Ascending aorta (tissue), 2 donors: ENCODE measurements at regions of chr11 and their contacts with region 1.

Region 1: GRCh38 chr11:33257897-33258630 is 883 bp downstream of the HIPK3 start:
- DNase-seq: peak; percentile 35 to 94
- H3K4me3 ChIP-seq: peak overlapping the region; percentile 91 to 94
- H3K27ac ChIP-seq: peak overlapping the region; percentile 100
- H3K4me1 ChIP-seq: peaks cover 0 to 27% of the 10 kb centered on the region in 2 donors
- H3K27me3 ChIP-seq: no peaks in the 10 kb centered on the region
- CTCF ChIP-seq: peak in 2 of 3 experiments; percentile 35 to 42

Region 2: GRCh38 chr11:33039274-33040032 is 218.6 kb before region 1 on chr11 and contains the start of gene TCP11L1:
- intact Hi-C with region 1: loop called (anchors 5 kb)
- DNase-seq: peak; percentile 62 to 95
- H3K4me3 ChIP-seq: peak within 1 kb of the TSS; percentile 85 to 96
- H3K27ac ChIP-seq: peak within 1 kb of the TSS; percentile 97 to 99
- H3K4me1 ChIP-seq: peaks cover 4 to 7% of the 10 kb centered on the region in 2 donors
- H3K27me3 ChIP-seq: no peaks in the 10 kb centered on the region
- CTCF ChIP-seq: no peak
- total RNA-seq, gene TCP11L1: 33.6 TPM

Region 3: GRCh38 chr11:33147559-33147958 is 110.5 kb before region 1 on chr11:
- intact Hi-C with region 1: no loop called
- DNase-seq: no peak
- H3K4me3 ChIP-seq: no peak overlapping the region
- H3K27ac ChIP-seq: no peak overlapping the region
- H3K4me1 ChIP-seq: no peaks in the 10 kb centered on the region
- H3K27me3 ChIP-seq: no peaks in the 10 kb centered on the region
- CTCF ChIP-seq: no peak

Region 4: GRCh38 chr11:33291004-33291777 is 33.1 kb after region 1 on chr11:
- intact Hi-C with region 1: loop called (anchors 2 kb)
- DNase-seq: no peak
- H3K4me3 ChIP-seq: peak overlapping the region in 1 of 2 donors; percentile 5
- H3K27ac ChIP-seq: peak overlapping the region; percentile 17 to 53
- H3K4me1 ChIP-seq: peaks cover 0 to 22% of the 10 kb centered on the region in 2 donors
- H3K27me3 ChIP-seq: no peaks in the 10 kb centered on the region
- CTCF ChIP-seq: no peak

Region 5: GRCh38 chr11:33687733-33688479 is 429.8 kb after region 1 on chr11:
- intact Hi-C with region 1: loop called (anchors 1 kb)
- DNase-seq: no peak
- H3K4me3 ChIP-seq: no peak overlapping the region
- H3K27ac ChIP-seq: no peak overlapping the region
- H3K4me1 ChIP-seq: peaks cover 6 to 17% of the 10 kb centered on the region in 2 donors
- H3K27me3 ChIP-seq: no peaks in the 10 kb centered on the region
- CTCF ChIP-seq: peak; percentile 36 to 62 (median 50)

Region 6: DNA sequence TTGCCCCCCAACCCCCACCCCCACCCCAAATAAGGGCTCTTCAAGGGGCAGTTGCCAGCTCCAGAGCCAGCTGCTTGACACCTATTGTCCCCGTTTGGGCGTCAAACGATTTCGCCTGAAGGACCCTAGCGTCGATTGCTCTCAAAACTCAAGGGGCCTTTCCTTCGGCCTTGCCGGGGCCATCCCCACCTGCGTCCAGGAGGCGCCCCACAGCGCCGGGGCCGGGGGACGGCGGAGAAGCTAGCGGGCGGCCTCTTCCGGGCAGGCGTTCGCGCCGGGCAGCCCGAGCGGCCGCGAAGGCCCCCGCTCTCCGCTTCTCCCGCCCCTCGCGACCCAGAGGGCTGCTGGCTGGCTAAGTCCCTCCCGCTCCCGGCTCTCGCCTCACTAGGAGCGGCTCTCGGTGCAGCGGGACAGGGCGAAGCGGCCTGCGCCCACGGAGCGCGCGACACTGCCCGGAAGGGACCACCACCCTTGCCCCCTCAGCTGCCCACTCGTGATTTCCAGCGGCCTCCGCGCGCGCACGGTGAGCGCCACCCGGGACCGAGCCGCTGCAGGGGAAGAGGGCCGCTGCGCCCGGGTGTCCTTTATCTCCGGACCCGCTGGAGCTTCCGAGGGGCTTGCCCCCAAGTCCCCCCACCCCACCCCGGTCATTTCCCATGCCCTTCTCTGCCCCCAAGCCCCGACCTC is 793.4 kb after region 1 on chr11 and contains the start of gene CAPRIN1:
- intact Hi-C with region 1: loop called (anchors 5 kb)
- DNase-seq: peak; percentile 23 to 91
- H3K4me3 ChIP-seq: peak within 1 kb of the TSS; percentile 92 to 99
- H3K27ac ChIP-seq: peak within 1 kb of the TSS; percentile 98 to 100
- H3K4me1 ChIP-seq: peaks cover 6 to 26% of the 10 kb centered on the region in 2 donors
- H3K27me3 ChIP-seq: no peaks in the 10 kb centered on the region
- CTCF ChIP-seq: peak in 1 of 3 experiments; percentile 8
- total RNA-seq, gene CAPRIN1: 155 TPM